ENCODE measurements at regions of chr16 and their contacts with region 1.

Region 1: GRCh38 chr16:24700549-24701392 is 28.7 kb upstream of the TNRC6A start:
- DNase-seq: peak; percentile 96
- H3K4me3 ChIP-seq: no peak overlapping the region
- H3K27ac ChIP-seq: peak overlapping the region; percentile 82 to 89 (median 86)
- H3K4me1 ChIP-seq: peaks cover 2 to 37% (median 29%) of the 10 kb centered on the region in 4 donors
- H3K27me3 ChIP-seq: no peaks in the 10 kb centered on the region
- CTCF ChIP-seq: peak in 1 of 4 experiments; percentile 22
- EP300 ChIP-seq: peak; percentile 71 to 98 (median 96)
- POLR2A ChIP-seq: no peak

Region 2: DNA sequence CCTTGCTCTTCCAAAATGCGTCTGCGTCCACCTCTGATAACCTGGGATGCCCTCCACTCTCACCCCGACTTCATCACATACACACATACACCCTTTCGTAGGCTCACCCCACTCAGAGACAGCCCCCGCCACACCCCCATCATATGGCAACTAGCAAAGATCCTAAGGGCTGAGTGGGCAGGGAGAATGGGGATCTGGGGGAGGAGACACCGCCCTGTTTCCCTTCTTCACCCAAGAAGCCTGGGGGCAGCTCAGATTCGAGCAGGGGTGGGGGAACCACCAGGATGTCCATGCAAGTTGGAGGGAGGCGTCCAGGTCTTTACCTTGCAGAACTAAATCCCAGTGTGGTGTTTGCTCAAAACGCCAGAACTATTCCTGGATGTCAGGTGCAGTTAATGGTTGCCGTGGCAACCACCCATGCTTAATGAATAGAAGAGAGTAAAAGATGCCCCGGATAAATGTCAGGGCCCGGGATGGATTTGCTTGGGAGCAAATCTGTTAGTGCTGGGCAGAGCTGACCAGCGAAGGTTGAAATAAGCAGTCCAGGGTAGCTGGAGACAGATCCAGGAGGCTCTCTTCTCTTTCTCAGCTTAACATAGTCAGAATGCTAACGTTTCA is 371.8 kb before region 1 on chr16:
- intact Hi-C with region 1: no loop called
- DNase-seq: no peak
- H3K4me3 ChIP-seq: no peak overlapping the region
- H3K27ac ChIP-seq: no peak overlapping the region
- H3K4me1 ChIP-seq: no peaks in the 10 kb centered on the region
- H3K27me3 ChIP-seq: no peaks in the 10 kb centered on the region
- CTCF ChIP-seq: no peak
- EP300 ChIP-seq: no peak
- POLR2A ChIP-seq: no peak

Region 3: GRCh38 chr16:24776501-24777220 is 75.9 kb after region 1 on chr16:
- intact Hi-C with region 1: loop called (anchors 1 kb)
- DNase-seq: peak; percentile 75
- H3K4me3 ChIP-seq: no peak overlapping the region
- H3K27ac ChIP-seq: peak overlapping the region; percentile 47 to 80 (median 73)
- H3K4me1 ChIP-seq: peaks cover 0 to 89% (median 72%) of the 10 kb centered on the region in 4 donors
- H3K27me3 ChIP-seq: no peaks in the 10 kb centered on the region
- CTCF ChIP-seq: no peak
- EP300 ChIP-seq: no peak
- POLR2A ChIP-seq: no peak